ENCODE measurements at regions of chr1 and their contacts with region 1.

Region 1: DNA sequence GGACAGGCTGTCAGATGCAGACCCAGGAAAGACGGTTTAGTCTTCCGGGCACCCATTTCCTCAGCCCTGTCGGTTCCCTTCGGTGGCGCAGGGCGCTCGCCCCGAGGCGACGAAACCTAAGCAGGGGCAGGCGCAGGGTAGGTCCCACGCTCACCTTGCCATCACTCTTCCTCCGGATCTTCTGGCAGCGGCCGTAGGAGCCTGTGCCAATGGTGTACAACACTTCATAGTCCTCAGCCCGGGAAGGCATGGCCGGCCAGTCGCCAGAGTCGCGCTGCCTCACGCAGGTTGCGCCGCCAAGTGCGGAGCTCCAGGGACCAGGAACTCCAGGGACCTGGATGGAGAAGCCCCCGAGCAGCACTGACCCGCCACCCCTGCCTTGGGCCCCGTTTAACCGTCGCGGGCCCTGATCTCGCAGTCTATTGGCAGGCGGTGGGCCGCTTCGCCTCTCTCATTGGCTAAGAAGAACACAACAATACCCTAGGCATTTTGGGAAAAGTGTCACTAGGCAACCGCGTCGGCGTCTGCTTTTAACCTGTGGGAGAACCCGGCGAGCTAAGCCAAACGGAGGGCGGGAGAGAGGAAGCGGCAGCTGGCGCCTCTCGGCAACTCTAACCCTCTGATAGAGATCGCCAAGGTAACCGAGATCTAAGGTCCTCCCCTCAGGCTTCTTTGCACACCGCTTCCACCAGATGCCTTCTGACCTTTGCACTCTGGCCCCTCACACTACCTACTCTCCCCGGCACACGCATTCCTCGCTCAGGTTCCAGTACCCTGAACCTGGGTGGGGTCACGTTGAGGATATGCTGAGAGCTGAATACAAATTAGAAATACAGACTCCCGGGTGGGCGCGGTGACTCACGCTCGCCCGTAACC is at the start of gene NEK2:
- DNase-seq: peak; percentile 96
- ATAC-seq: peak; percentile 94
- H3K4me3 Mint-ChIP-seq: peak within 1 kb of the TSS; percentile 96
- H3K27ac Mint-ChIP-seq: peak within 1 kb of the TSS; percentile 97
- H3K4me1 Mint-ChIP-seq: peaks cover 12% of the 10 kb centered on the region
- H3K27me3 Mint-ChIP-seq: no peaks in the 10 kb centered on the region
- CTCF ChIP-seq: no peak
- total RNA-seq, gene NEK2: 22.7 to 25.2 TPM (median 23.5 TPM) in 3 replicates

Region 2: DNA sequence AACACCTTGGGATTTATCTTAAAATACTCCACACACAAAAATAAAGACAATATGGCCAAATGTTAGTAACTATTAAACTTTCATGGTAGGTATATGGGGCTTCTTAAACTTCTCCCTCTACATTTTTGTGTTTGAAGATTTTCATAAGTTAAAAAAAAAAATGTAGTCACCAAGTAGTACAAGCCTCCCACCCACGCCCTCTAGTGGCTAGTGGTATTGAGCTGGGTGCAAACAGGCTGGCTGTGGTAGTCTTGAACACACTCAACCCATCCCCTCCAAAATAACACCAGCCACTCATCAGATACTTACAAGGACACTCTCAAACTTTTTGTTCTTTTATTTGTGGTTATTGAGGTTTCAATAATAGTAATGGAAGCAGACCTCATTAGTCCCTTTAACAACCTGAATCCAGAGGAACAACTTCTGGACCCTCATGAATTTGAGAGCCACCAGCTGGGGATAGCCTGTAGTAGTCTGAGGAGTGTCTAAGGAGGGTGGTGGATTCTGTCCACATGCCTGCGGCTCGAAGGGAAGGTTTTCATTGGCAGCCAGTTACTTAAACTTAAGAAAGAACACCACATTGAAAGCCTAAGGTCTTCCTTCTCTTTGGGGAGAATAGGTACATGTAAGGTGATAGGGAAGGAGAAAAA is 199.1 kb before region 1 on chr1:
- CTCF ChIA-PET with region 1: no interaction called
- POLR2A ChIA-PET with region 1: no interaction called
- DNase-seq: peak; percentile 78
- ATAC-seq: peak; percentile 80
- H3K4me3 Mint-ChIP-seq: no peak overlapping the region
- H3K27ac Mint-ChIP-seq: no peak overlapping the region
- H3K4me1 Mint-ChIP-seq: peaks cover 6% of the 10 kb centered on the region
- H3K27me3 Mint-ChIP-seq: peaks cover 15% of the 10 kb centered on the region
- CTCF ChIP-seq: peak; percentile 74

Region 3: DNA sequence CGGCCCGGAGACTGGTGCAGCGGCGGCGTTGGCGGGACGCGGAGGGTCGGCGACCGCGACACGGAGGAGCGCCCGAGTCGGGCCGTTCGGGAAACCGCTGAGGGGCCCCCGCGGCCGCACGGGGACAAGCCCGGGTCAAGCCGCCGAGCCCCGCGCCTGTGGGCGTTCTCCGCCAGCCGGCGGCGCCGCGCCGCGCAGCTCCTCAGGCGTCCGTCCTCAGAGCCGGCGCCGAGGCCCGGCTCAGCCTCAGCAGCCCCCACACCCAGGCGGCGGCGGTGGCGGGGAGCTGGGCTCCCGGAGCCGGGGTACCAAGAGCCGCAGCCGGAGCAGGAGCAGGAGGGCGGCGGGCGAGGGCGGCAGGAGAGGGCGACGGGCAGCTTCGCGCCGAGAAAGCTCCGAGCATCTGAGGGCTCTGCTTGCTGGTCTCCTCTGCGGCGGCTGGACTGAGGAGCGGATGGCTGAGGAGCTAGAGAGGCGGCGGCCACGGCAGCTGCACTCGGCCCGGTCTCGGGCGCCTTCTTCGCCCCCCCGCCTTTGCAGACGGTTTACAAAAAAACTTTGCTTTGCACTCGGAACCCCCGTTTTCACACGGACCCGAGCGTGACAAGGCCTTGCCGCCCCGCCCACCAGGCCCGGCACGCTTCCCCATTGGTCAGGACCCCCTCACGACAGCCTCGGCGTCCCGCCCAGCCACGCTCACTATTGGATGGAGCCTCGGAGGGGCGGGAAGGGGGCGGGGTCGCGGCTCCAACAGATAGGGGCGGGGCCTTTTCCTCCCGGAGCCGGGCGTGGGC is 96.6 kb before region 1 on chr1 and contains the start of gene SLC30A1:
- CTCF ChIA-PET with region 1: interaction called, 4 read pairs
- POLR2A ChIA-PET with region 1: interaction called, 12 read pairs
- DNase-seq: peak; percentile 99
- ATAC-seq: peak; percentile 88
- H3K4me3 Mint-ChIP-seq: peak within 1 kb of the TSS; percentile 92
- H3K27ac Mint-ChIP-seq: peak within 1 kb of the TSS; percentile 84
- H3K4me1 Mint-ChIP-seq: peaks cover 45% of the 10 kb centered on the region
- H3K27me3 Mint-ChIP-seq: no peaks in the 10 kb centered on the region
- CTCF ChIP-seq: no peak
- total RNA-seq, gene SLC30A1: 20.0 to 26.9 TPM (median 25.3 TPM) in 3 replicates

Measured in WTC11 (cell line).